PC-3 (cell line): ENCODE measurements at regions of chr14 and their contacts with region 1.

Region 1: GRCh38 chr14:52131640-52132320 is 62.9 kb upstream of the NID2 start:
- DNase-seq: peak; percentile 95
- ATAC-seq: peak; percentile 98
- H3K4me3 ChIP-seq: no peak overlapping the region
- H3K27ac ChIP-seq: no peak overlapping the region
- H3K4me1 ChIP-seq: peaks cover 6% of the 10 kb centered on the region; the same call in 1 of the 2 replicates
- H3K27me3 ChIP-seq: no peaks in the 10 kb centered on the region
- CTCF ChIP-seq: peak; percentile 92

Region 2: DNA sequence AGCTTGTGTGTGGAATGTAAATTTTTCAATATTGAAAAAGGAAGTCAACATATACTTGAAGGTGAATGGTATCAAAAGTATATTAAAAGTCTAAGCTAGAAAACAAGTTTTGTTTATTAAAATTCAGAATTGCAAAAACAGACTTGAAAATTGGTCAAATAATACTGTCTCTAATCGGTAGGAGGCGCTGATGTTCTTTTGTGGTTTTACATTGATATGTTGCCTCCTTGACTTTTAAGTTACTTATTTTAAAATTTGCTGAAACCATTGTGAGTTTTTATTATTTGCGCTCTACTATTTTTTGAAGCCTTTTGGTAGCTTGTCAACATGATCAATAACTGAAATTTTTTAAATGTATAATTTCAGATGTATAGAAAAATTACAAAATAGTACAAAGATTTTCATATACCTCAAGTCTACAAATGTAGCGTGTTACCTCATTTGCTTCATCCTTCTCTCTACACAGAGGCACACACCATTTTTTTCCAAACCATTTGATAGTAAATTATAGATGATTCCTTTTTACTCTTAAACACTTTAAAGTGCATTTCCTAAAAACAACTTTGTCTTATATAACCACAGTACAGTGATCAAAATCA is 135.5 kb before region 1 on chr14:
- CTCF ChIA-PET with region 1: no interaction called
- POLR2A ChIA-PET with region 1: no interaction called
- intact Hi-C with region 1: loop called (anchors 1 kb)
- DNase-seq: peak; percentile 58
- ATAC-seq: peak; percentile 50; the same call in 1 of the 2 replicates
- H3K4me3 ChIP-seq: no peak overlapping the region
- H3K27ac ChIP-seq: no peak overlapping the region
- H3K4me1 ChIP-seq: peaks cover 14% of the 10 kb centered on the region
- H3K27me3 ChIP-seq: no peaks in the 10 kb centered on the region
- CTCF ChIP-seq: peak; percentile 91

Region 3: GRCh38 chr14:52013984-52014600 is 117.7 kb before region 1 on chr14:
- CTCF ChIA-PET with region 1: interaction called, 3 read pairs
- POLR2A ChIA-PET with region 1: no interaction called
- intact Hi-C with region 1: loop called (anchors 5 kb)
- DNase-seq: peak; percentile 37
- ATAC-seq: peak; percentile 57
- H3K4me3 ChIP-seq: no peak overlapping the region
- H3K27ac ChIP-seq: no peak overlapping the region
- H3K4me1 ChIP-seq: no peaks in the 10 kb centered on the region
- H3K27me3 ChIP-seq: no peaks in the 10 kb centered on the region
- CTCF ChIP-seq: peak; percentile 63

Region 4: GRCh38 chr14:52043690-52044089 is 88.1 kb before region 1 on chr14:
- CTCF ChIA-PET with region 1: no interaction called
- POLR2A ChIA-PET with region 1: no interaction called
- intact Hi-C with region 1: loop called (anchors 1 kb)
- DNase-seq: peak; percentile 63
- ATAC-seq: peak; percentile 30; the same call in 1 of the 2 replicates
- H3K4me3 ChIP-seq: no peak overlapping the region
- H3K27ac ChIP-seq: no peak overlapping the region
- H3K4me1 ChIP-seq: peaks cover 24% of the 10 kb centered on the region
- H3K27me3 ChIP-seq: no peaks in the 10 kb centered on the region
- CTCF ChIP-seq: peak; percentile 76

Region 5: GRCh38 chr14:52071675-52072074 is 60.1 kb before region 1 on chr14:
- CTCF ChIA-PET with region 1: no interaction called
- POLR2A ChIA-PET with region 1: no interaction called
- intact Hi-C with region 1: loop called (anchors 1 kb)
- DNase-seq: peak; percentile 44
- ATAC-seq: no peak
- H3K4me3 ChIP-seq: no peak overlapping the region
- H3K27ac ChIP-seq: no peak overlapping the region
- H3K4me1 ChIP-seq: peaks cover 17% of the 10 kb centered on the region
- H3K27me3 ChIP-seq: no peaks in the 10 kb centered on the region
- CTCF ChIP-seq: peak; percentile 54

Region 6: GRCh38 chr14:52080817-52081755 is 50.7 kb before region 1 on chr14:
- CTCF ChIA-PET with region 1: no interaction called
- POLR2A ChIA-PET with region 1: interaction called, 7 read pairs
- intact Hi-C with region 1: loop called (anchors 1 kb)
- DNase-seq: peak; percentile 96
- ATAC-seq: peak; percentile 70
- H3K4me3 ChIP-seq: peak overlapping the region; percentile 51
- H3K27ac ChIP-seq: peak overlapping the region; percentile 97
- H3K4me1 ChIP-seq: peaks cover 61% of the 10 kb centered on the region
- H3K27me3 ChIP-seq: no peaks in the 10 kb centered on the region
- CTCF ChIP-seq: no peak